CD8-positive, alpha-beta T cell (primary cell): ENCODE measurements at regions of chr5 and their contacts with region 1.

Region 1: GRCh38 chr5:10761166-10761932 is at the start of gene DAP:
- DNase-seq: peak; percentile 77 to 98 (median 92)
- ATAC-seq: peak; percentile 86
- H3K4me3 ChIP-seq: peak within 1 kb of the TSS; percentile 56 to 64
- H3K4me3 Mint-ChIP-seq: peak within 1 kb of the TSS; percentile 93
- H3K27ac ChIP-seq: peak within 1 kb of the TSS; percentile 71 to 80
- H3K27ac Mint-ChIP-seq: peak within 1 kb of the TSS; percentile 89
- H3K4me1 ChIP-seq: peaks cover 14% of the 10 kb centered on the region
- H3K4me1 Mint-ChIP-seq: peaks cover 48% of the 10 kb centered on the region
- H3K27me3 ChIP-seq: no peaks in the 10 kb centered on the region
- H3K27me3 Mint-ChIP-seq: no peaks in the 10 kb centered on the region
- CTCF ChIP-seq: no peak
- total RNA-seq, gene DAP: 30.0 to 35.0 TPM

Region 2: GRCh38 chr5:10249948-10250803 is 511.2 kb before region 1 on chr5 and contains the start of gene CCT5:
- CTCF ChIA-PET with region 1: no interaction called
- POLR2A ChIA-PET with region 1: no interaction called
- intact Hi-C with region 1: loop called (anchors 1 kb)
- DNase-seq: peak; percentile 78 to 99 (median 89)
- ATAC-seq: peak; percentile 81
- H3K4me3 ChIP-seq: peak within 1 kb of the TSS; percentile 85 to 99
- H3K4me3 Mint-ChIP-seq: peak within 1 kb of the TSS; percentile 94
- H3K27ac ChIP-seq: peak within 1 kb of the TSS; percentile 91 to 97
- H3K27ac Mint-ChIP-seq: peak within 1 kb of the TSS; percentile 99
- H3K4me1 ChIP-seq: peaks cover 34% of the 10 kb centered on the region
- H3K4me1 Mint-ChIP-seq: peaks cover 49% of the 10 kb centered on the region
- H3K27me3 ChIP-seq: no peaks in the 10 kb centered on the region
- H3K27me3 Mint-ChIP-seq: no peaks in the 10 kb centered on the region
- CTCF ChIP-seq: no peak
- total RNA-seq, gene CCT5: 38.1 to 41.0 TPM

Region 3: GRCh38 chr5:10441083-10441991 is 320.0 kb before region 1 on chr5 and contains the start of gene ROPN1L:
- CTCF ChIA-PET with region 1: no interaction called
- POLR2A ChIA-PET with region 1: no interaction called
- intact Hi-C with region 1: loop called (anchors 1 to 2 kb)
- DNase-seq: peak; percentile 50 to 88 (median 75)
- ATAC-seq: peak; percentile 94
- H3K4me3 ChIP-seq: peak within 1 kb of the TSS; percentile 76 to 88
- H3K4me3 Mint-ChIP-seq: peak within 1 kb of the TSS; percentile 84
- H3K27ac ChIP-seq: peak within 1 kb of the TSS; percentile 41 to 56
- H3K27ac Mint-ChIP-seq: peak within 1 kb of the TSS; percentile 38
- H3K4me1 ChIP-seq: peaks cover 41% of the 10 kb centered on the region
- H3K4me1 Mint-ChIP-seq: peaks cover 41% of the 10 kb centered on the region
- H3K27me3 ChIP-seq: no peaks in the 10 kb centered on the region
- H3K27me3 Mint-ChIP-seq: no peaks in the 10 kb centered on the region
- CTCF ChIP-seq: no peak
- total RNA-seq, gene ROPN1L: not detected

Region 4: GRCh38 chr5:10563945-10564837 is 197.2 kb before region 1 on chr5 and contains the start of gene ANKRD33B:
- CTCF ChIA-PET with region 1: no interaction called
- POLR2A ChIA-PET with region 1: no interaction called
- intact Hi-C with region 1: loop called (anchors 1 to 2 kb)
- DNase-seq: peak; percentile 52 to 88 (median 74)
- ATAC-seq: peak; percentile 89
- H3K4me3 ChIP-seq: peak within 1 kb of the TSS; percentile 57 to 70
- H3K4me3 Mint-ChIP-seq: peak within 1 kb of the TSS; percentile 83
- H3K27ac ChIP-seq: no peak within 1 kb of the TSS
- H3K27ac Mint-ChIP-seq: no peak within 1 kb of the TSS
- H3K4me1 ChIP-seq: peaks cover 16% of the 10 kb centered on the region
- H3K4me1 Mint-ChIP-seq: peaks cover 14% of the 10 kb centered on the region
- H3K27me3 ChIP-seq: peaks cover 0 to 12% of the 10 kb centered on the region in 2 experiments
- H3K27me3 Mint-ChIP-seq: peaks cover 7% of the 10 kb centered on the region
- CTCF ChIP-seq: no peak
- total RNA-seq, gene ANKRD33B: 1.3 to 1.4 TPM

Region 5: GRCh38 chr5:10627160-10627701 is 134.1 kb before region 1 on chr5:
- CTCF ChIA-PET with region 1: no interaction called
- POLR2A ChIA-PET with region 1: no interaction called
- intact Hi-C with region 1: loop called in 1 of 2 experiments (anchors 5 kb)
- DNase-seq: peak in 1 of 9 experiments; percentile 21
- ATAC-seq: no peak
- H3K4me3 ChIP-seq: peak overlapping the region; percentile 33 to 61
- H3K4me3 Mint-ChIP-seq: peak overlapping the region; percentile 82
- H3K27ac ChIP-seq: no peak overlapping the region
- H3K27ac Mint-ChIP-seq: peak overlapping the region; percentile 61
- H3K4me1 ChIP-seq: peaks cover 7% of the 10 kb centered on the region
- H3K4me1 Mint-ChIP-seq: peaks cover 17% of the 10 kb centered on the region
- H3K27me3 ChIP-seq: no peaks in the 10 kb centered on the region
- H3K27me3 Mint-ChIP-seq: no peaks in the 10 kb centered on the region
- CTCF ChIP-seq: no peak

Region 6: GRCh38 chr5:10724799-10725507 is 36.4 kb before region 1 on chr5:
- CTCF ChIA-PET with region 1: no interaction called
- POLR2A ChIA-PET with region 1: no interaction called
- intact Hi-C with region 1: no loop called
- DNase-seq: no peak
- ATAC-seq: no peak
- H3K4me3 ChIP-seq: no peak overlapping the region
- H3K4me3 Mint-ChIP-seq: no peak overlapping the region
- H3K27ac ChIP-seq: no peak overlapping the region
- H3K27ac Mint-ChIP-seq: no peak overlapping the region
- H3K4me1 ChIP-seq: no peaks in the 10 kb centered on the region
- H3K4me1 Mint-ChIP-seq: peaks cover 19% of the 10 kb centered on the region
- H3K27me3 ChIP-seq: no peaks in the 10 kb centered on the region
- H3K27me3 Mint-ChIP-seq: no peaks in the 10 kb centered on the region
- CTCF ChIP-seq: no peak